ENCODE measurements at regions of chr11 and their contacts with region 1.

Region 1: GRCh38 chr11:447923-448731 is 2.0 kb upstream of the PTDSS2 start:
- DNase-seq: peak; percentile 96
- H3K4me3 Mint-ChIP-seq: peak overlapping the region; percentile 90
- H3K27ac Mint-ChIP-seq: peak overlapping the region; percentile 97
- H3K4me1 Mint-ChIP-seq: peaks cover 32% of the 10 kb centered on the region
- H3K27me3 Mint-ChIP-seq: peaks cover 9% of the 10 kb centered on the region

Region 2: GRCh38 chr11:406978-407739 is 41.0 kb before region 1 on chr11:
- CTCF ChIA-PET with region 1: interaction called, 67 read pairs
- POLR2A ChIA-PET with region 1: interaction called, 57 read pairs
- DNase-seq: peak; percentile 93
- H3K4me3 Mint-ChIP-seq: peak overlapping the region; percentile 32
- H3K27ac Mint-ChIP-seq: no peak overlapping the region
- H3K4me1 Mint-ChIP-seq: peaks cover 12% of the 10 kb centered on the region
- H3K27me3 Mint-ChIP-seq: no peaks in the 10 kb centered on the region

Region 3: GRCh38 chr11:416757-417621 is 31.1 kb before region 1 on chr11:
- CTCF ChIA-PET with region 1: interaction called, 62 read pairs
- POLR2A ChIA-PET with region 1: interaction called, 102 read pairs
- DNase-seq: peak; percentile 67
- H3K4me3 Mint-ChIP-seq: peak overlapping the region; percentile 99
- H3K27ac Mint-ChIP-seq: peak overlapping the region; percentile 91
- H3K4me1 Mint-ChIP-seq: peaks cover 30% of the 10 kb centered on the region
- H3K27me3 Mint-ChIP-seq: no peaks in the 10 kb centered on the region

Region 4: DNA sequence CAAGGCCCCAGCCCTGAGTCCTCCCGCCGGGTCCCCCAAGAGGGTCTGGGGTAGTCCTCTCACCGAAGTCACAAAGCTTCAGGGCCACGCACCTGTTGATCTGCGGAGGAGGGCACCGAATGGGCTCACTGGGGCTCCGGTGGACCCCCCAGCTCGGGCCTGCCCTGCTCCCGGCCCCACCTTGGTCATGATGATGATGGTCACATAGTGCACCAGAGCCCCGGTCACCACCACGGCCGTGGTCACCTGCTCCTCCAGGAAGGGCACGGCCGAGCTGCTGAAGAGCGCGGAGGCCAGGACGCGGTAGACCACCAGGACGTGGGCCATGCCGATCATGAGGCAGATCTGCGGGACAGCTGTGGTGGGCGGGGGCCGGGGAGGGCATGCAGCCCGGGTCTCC is 19.8 kb before region 1 on chr11:
- CTCF ChIA-PET with region 1: no interaction called
- POLR2A ChIA-PET with region 1: no interaction called
- DNase-seq: no peak
- H3K4me3 Mint-ChIP-seq: no peak overlapping the region
- H3K27ac Mint-ChIP-seq: no peak overlapping the region
- H3K4me1 Mint-ChIP-seq: no peaks in the 10 kb centered on the region
- H3K27me3 Mint-ChIP-seq: no peaks in the 10 kb centered on the region

Region 5: DNA sequence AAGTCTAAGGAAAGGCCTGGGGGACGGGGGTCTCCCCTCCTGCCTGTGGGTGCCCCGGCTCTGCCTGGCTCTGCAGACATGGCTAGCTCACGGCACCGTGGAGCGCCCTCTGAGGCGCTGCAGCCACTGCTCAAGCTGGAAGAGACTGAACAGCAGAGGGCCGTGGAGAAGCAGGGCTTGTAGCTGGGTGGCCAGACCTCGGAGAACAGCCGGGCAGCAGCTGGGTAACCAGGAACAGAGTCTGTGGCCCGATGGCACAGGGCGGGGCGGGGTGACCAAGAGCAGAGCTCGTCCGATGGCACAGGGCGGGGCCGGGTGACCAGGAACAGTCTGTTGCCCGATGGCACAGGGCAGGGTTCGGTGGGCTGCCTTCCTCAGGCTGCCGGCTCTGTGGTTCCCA is 40.9 kb after region 1 on chr11:
- CTCF ChIA-PET with region 1: no interaction called
- POLR2A ChIA-PET with region 1: no interaction called
- DNase-seq: no peak
- H3K4me3 Mint-ChIP-seq: no peak overlapping the region
- H3K27ac Mint-ChIP-seq: no peak overlapping the region
- H3K4me1 Mint-ChIP-seq: no peaks in the 10 kb centered on the region
- H3K27me3 Mint-ChIP-seq: no peaks in the 10 kb centered on the region

Region 6: GRCh38 chr11:506238-506994 is 58.3 kb after region 1 on chr11:
- CTCF ChIA-PET with region 1: interaction called, 11 read pairs
- POLR2A ChIA-PET with region 1: interaction called, 56 read pairs
- DNase-seq: peak; percentile 97
- H3K4me3 Mint-ChIP-seq: peak overlapping the region; percentile 95
- H3K27ac Mint-ChIP-seq: peak overlapping the region; percentile 99
- H3K4me1 Mint-ChIP-seq: peaks cover 40% of the 10 kb centered on the region
- H3K27me3 Mint-ChIP-seq: no peaks in the 10 kb centered on the region

Measured in activated CD4-positive, alpha-beta memory T cell treated with anti-CD3 and anti-CD28 coated beads, Interleukin-2, amount 10 ng/mL, durations not matched to agents 7 days and 5 days (primary cell).